BJ (cell line): ENCODE measurements at regions of chr2 and their contacts with region 1.

Region 1: GRCh38 chr2:47283659-47284058 is 119.3 kb upstream of the MSH2 start:
- DNase-seq: no peak
- H3K4me3 ChIP-seq: no peak overlapping the region
- H3K27me3 ChIP-seq: no peaks in the 10 kb centered on the region
- CTCF ChIP-seq: no peak

Region 2: DNA sequence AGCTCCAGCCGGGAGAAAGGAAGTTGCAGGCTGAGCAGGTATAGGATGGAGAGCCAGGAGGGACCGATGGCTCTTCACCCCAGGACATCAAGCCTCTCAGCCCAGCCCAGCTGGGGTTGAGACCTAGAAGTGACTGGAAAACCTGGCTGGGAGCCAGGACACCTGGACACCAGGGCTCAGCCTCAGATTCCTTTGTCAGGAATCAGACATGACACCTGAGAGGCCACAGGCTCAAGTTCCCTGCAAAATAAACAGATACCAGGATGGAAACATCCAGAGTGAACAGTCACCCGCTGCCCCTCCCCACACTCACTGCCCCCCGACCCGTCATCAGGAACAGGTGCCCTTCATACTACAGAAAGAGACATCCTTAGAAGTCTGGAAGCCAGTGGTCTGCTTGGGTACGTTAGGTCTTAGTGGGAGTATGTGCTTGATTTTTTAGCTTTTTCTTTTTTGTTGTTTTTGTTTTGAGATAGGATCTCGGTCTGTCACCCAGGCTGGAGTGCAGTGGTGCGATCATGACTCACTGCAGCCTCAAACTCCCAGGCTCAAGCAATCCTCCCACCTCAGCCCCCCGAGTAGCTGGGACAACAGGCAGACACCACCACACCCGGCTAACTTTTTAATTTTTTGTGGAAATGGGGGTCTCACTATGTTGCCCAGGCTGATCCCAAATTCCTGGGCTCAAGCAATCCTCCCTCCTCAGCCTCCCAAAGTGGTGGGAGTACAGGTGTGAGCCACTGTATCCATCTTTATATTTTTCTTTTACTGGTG is 32.8 kb before region 1 on chr2:
- CTCF ChIA-PET with region 1: no interaction called
- POLR2A ChIA-PET with region 1: no interaction called
- DNase-seq: no peak
- H3K4me3 ChIP-seq: no peak overlapping the region
- H3K27me3 ChIP-seq: no peaks in the 10 kb centered on the region
- CTCF ChIP-seq: no peak

Region 3: GRCh38 chr2:47272031-47272864 is 11.4 kb before region 1 on chr2:
- CTCF ChIA-PET with region 1: interaction called, 24 read pairs
- POLR2A ChIA-PET with region 1: no interaction called
- DNase-seq: no peak
- H3K4me3 ChIP-seq: peak overlapping the region; percentile 12
- H3K27me3 ChIP-seq: no peaks in the 10 kb centered on the region
- CTCF ChIP-seq: peak; percentile 82